Body of pancreas (tissue), 4 donors: ENCODE measurements at regions of chr4 and their contacts with region 1.

Region 1: DNA sequence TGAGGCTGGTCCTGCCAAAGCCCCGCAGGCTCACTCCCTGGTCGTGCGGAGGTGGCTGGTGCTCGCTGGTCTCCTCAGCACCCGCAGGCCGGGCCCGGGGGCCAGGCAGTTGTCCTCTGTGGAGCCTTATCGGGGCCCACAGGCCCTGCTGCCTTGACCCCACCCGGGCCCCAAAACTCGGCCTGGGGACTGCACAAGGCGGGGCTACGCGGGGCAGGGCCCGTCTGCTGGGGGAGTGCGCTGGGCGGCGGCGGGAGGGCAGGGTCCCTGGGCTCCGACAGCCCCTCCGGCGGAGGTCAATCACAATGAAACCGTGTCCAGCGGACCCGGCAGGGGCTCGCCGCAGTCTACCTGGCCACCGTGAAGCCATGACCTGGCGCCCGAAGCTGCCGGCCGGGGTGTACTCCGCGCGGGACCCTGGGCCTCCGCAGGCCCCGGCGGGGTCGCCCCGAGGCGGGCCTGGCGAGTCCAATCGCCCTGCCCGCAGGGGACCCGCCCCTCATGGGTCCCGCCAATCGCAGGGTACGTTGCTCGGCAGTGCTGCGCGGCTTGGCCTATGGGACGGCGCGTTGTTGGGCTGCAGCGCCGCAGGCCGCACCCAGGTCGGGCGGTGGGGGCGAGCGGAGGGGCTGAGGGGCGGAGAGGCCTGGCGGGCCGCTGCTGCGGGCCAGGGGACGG is at the start of gene ADD1:
- DNase-seq: peak; percentile 89 to 94 (median 93)
- ATAC-seq: peak; percentile 98
- H3K4me3 ChIP-seq: peak within 1 kb of the TSS; percentile 73 to 81
- H3K27ac ChIP-seq: peak within 1 kb of the TSS; percentile 76 to 96 (median 88)
- H3K4me1 ChIP-seq: peaks cover 40% of the 10 kb centered on the region
- H3K27me3 ChIP-seq: no peaks in the 10 kb centered on the region
- CTCF ChIP-seq: no peak
- POLR2A ChIP-seq: peak; percentile 83 to 91 (median 88)
- total RNA-seq, gene ADD1: 84.1 to 266 TPM

Region 2: DNA sequence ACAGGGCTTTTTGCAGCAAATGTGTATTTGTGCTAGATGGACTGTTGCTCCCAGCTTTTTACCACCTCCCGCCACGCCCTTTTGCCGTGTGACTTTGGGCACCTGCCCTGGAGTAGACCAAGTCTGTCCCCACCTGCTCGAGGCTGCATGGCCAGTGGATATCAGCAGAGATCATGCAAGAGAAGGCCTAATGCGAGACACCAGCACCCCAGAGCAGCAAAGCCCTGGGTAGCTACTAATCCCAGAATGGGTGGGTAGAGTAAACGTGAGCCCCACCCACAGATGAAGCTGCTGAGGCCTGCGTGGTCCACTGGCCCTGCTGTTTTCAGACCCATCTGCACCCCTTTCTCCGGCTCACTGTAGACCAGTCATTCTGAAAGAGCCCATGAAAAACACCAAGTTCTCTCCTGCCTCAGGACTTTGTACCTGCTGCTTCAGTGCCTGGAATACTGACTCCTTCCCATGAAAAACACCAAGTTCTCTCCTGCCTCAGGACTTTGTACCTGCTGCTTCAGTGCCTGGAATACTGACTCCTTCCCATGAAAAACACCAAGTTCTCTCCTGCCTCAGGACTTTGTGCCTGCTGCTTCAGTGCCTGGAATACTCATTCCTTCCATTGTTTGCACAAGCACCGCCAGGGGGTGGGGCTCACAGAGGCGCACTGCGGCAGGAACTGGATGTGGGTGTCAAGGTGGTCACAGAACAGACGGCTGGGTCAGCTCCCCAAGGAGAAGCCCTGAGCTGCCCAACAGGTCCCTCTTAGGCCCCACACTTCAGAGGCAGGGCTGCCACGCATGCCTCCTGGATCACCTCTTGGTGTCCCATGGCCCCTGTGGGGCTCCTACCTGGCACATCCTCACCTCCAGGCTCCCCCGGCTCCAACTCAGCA is 82.1 kb before region 1 on chr4:
- intact Hi-C with region 1: loop called (anchors 10 kb)
- DNase-seq: peak; percentile 75 to 87 (median 85)
- ATAC-seq: peak; percentile 58
- H3K4me3 ChIP-seq: no peak overlapping the region
- H3K27ac ChIP-seq: peak overlapping the region; percentile 82 to 93 (median 88)
- H3K4me1 ChIP-seq: peaks cover 46% of the 10 kb centered on the region
- H3K27me3 ChIP-seq: no peaks in the 10 kb centered on the region
- CTCF ChIP-seq: peak in 4 of 7 experiments; percentile 16 to 41 (median 26)
- POLR2A ChIP-seq: peak in 2 of 3 donors; percentile 16 to 54